ENCODE measurements at regions of chr1 and their contacts with region 1.

Region 1: GRCh38 chr1:17125756-17126237 is 6.5 kb upstream of the PADI2 start:
- DNase-seq: peak; percentile 12
- H3K4me3 ChIP-seq: peak overlapping the region in 1 of 4 donors; percentile 25
- H3K27ac ChIP-seq: peak overlapping the region in 1 of 4 donors; percentile 38
- H3K4me1 ChIP-seq: peaks cover 0 to 27% (median 12%) of the 10 kb centered on the region in 3 donors
- H3K27me3 ChIP-seq: peaks cover 0 to 12% (median 0%) of the 10 kb centered on the region in 4 donors
- CTCF ChIP-seq: peak; percentile 91 to 98 (median 96)
- POLR2A ChIP-seq: no peak

Region 2: GRCh38 chr1:16727190-16728111 is 398.3 kb before region 1 on chr1:
- intact Hi-C with region 1: no loop called
- DNase-seq: no peak
- H3K4me3 ChIP-seq: no peak overlapping the region
- H3K27ac ChIP-seq: no peak overlapping the region
- H3K4me1 ChIP-seq: no peaks in the 10 kb centered on the region
- H3K27me3 ChIP-seq: peaks cover 0 to 46% (median 8%) of the 10 kb centered on the region in 4 donors
- CTCF ChIP-seq: no peak
- POLR2A ChIP-seq: no peak

Region 3: DNA sequence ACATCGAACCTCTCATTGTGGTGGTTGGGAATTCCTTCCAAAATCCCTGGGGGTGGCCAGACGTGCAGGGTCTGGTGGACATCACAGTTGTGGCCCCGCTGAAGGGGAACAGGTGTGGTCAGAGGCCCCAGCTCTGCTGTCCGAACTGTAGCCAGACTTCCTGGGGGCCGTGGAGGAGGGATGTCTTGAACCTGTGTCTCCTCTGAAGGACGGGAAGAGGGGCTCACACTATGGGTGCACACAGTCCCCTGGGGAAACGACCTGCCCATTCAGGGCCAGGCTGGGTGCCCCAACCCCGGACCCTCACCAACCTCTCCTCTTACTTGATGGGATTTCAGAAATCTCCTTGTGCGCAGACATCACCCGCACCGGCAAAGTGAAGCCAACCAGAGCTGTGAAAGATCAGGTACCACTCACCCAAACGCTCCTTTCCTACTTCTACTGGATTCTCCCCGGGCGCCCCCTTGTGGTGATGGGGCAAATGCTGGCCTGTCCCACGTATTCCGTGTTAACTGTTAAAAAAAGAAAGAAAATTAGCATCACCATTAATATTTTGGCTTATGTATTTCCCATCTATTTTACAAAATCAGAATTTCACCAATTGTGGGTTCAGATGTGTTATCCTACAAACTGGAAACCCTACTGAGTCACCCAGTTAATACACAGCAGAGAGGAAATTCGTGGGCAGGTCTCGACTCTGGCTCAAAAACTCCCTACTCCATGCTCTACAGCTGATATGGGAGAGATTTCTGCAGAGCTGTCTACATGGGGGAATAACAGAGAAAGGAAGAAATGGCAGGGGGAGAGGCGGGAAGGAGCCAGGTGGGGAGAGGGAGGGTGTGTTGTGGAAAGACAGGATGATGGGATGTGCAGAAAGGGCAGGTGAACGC is 210.3 kb after region 1 on chr1:
- intact Hi-C with region 1: loop called (anchors 5 kb)
- DNase-seq: no peak
- H3K4me3 ChIP-seq: no peak overlapping the region
- H3K27ac ChIP-seq: no peak overlapping the region
- H3K4me1 ChIP-seq: no peaks in the 10 kb centered on the region
- H3K27me3 ChIP-seq: peaks cover 0 to 64% (median 0%) of the 10 kb centered on the region in 4 donors
- CTCF ChIP-seq: peak; percentile 41 to 89 (median 80)
- POLR2A ChIP-seq: no peak

Measured in esophagus squamous epithelium (tissue), 5 donors.